Left lung (tissue), 14 donors: ENCODE measurements at regions of chr1 and their contacts with region 1.

Region 1: DNA sequence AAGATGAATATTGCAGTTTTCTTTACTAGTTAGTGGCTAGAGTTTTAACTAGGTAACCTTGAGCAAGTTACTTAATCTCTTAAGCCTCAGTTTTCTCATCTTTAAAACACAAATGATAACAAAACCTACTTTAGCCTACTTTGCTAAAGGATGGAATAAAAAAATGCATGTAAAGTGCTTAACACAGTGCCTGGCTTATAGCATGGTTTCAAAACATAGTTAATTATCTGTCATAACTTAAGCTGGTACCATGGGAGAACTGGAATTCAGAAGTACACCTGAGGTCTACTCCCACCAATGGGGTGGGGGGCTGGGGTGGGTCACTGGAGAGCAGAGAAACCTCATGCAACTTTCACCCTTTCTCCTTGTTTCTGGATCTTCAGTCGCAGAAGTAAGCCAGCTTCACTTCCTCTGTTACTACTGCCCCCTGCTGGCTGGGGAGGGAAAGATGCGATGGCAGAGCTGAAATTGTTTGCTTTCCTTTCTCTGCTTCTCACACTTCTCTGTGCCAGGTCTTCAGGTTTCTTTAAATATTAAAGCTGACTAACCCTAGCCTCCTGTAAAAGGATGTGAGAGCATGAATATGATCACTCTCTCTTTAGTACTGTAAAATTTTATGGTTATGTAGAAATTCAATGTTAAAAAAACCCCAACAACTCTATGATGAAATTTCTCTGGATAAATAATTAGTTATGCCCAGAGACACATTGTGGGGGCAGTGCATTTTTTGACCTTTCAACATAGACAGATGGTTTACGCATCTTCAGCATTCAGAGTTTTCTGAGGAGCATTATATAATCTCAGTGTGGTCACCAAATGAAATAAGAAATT is 324.2 kb downstream of the HLX start:
- DNase-seq: peak; percentile 65 to 84 (median 78)
- ATAC-seq: peak; percentile 88
- H3K4me3 ChIP-seq: no peak overlapping the region
- H3K27ac ChIP-seq: no peak overlapping the region
- H3K4me1 ChIP-seq: peaks cover 5 to 13% of the 10 kb centered on the region in 2 donors
- H3K27me3 ChIP-seq: no peaks in the 10 kb centered on the region
- CTCF ChIP-seq: peak; percentile 81 to 88

Region 2: GRCh38 chr1:220879076-220879508 is 324.3 kb before region 1 on chr1 and contains the start of gene HLX:
- intact Hi-C with region 1: loop called in 1 of 2 experiments (anchors 10 kb)
- DNase-seq: peak; percentile 93 to 97 (median 95)
- ATAC-seq: peak; percentile 81
- H3K4me3 ChIP-seq: peak within 1 kb of the TSS; percentile 70 to 71
- H3K27ac ChIP-seq: peak within 1 kb of the TSS; percentile 97 to 99
- H3K4me1 ChIP-seq: peaks cover 8 to 69% of the 10 kb centered on the region in 2 donors
- H3K27me3 ChIP-seq: peaks cover 12 to 47% of the 10 kb centered on the region in 2 donors
- CTCF ChIP-seq: no peak
- polyA plus RNA-seq, gene HLX: 37.5 to 68.9 (median 48.7) TPM

Region 3: GRCh38 chr1:221059506-221059905 is 143.9 kb before region 1 on chr1:
- intact Hi-C with region 1: no loop called
- DNase-seq: no peak
- ATAC-seq: no peak
- H3K4me3 ChIP-seq: no peak overlapping the region
- H3K27ac ChIP-seq: no peak overlapping the region
- H3K4me1 ChIP-seq: no peaks in the 10 kb centered on the region
- H3K27me3 ChIP-seq: no peaks in the 10 kb centered on the region
- CTCF ChIP-seq: no peak